Activated CD4-positive, alpha-beta memory T cell treated with anti-CD3 and anti-CD28 coated beads for 36 hours (primary cell): ENCODE measurements at regions of chr10 and their contacts with region 1.

Region 1: DNA sequence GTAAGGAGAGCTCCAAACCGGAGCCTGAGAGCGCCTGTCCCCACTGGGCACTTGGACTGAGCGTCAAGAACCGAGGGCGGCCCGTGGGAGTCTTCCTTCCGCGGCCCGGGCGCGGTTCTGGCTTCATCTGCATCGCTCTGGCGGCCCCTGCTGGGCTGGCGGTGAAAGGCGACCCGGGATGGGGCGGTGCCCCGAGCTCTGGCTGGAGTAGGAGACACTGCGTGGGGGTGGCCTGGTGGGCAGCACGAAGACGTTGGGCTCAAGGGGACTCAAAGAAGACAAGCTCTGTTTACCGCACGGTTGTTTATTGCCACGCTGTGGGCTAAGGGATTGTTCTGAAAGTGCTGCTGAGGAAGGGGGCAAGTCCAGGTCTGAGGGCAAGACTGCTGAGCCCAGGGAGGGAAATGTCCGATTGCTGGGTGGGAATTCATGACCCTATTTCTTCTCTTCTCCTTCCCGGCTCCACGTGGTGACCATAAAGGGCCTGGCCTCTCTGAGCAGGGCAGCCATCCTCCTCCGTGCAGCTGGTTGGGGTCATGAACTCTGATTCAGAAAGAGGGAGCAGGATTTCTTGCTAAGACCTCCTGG is 29.8 kb downstream of the PLAU start:
- DNase-seq: peak; percentile 89
- H3K4me3 Mint-ChIP-seq: peak overlapping the region; percentile 40
- H3K27ac Mint-ChIP-seq: no peak overlapping the region
- H3K4me1 Mint-ChIP-seq: peaks cover 8% of the 10 kb centered on the region
- H3K27me3 Mint-ChIP-seq: no peaks in the 10 kb centered on the region

Region 2: DNA sequence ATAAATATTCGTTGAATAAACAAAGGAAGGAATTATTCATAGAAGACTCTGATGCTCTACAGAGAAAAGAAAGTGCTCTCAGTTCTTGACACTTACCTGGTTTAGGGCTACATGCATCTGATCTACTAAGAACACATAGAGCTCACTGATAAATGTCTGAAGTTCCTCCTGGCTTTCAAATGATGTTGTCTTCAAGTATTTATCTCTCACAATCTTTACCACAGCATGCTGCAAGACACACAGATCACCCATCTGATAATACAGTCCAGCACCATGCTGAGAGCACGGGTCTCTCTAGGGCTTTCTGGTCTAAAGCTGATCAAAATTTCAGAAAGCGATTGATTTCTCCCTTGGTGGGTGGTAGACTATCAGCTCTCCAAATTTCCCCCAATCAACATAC is 643.8 kb before region 1 on chr10:
- CTCF ChIA-PET with region 1: no interaction called
- POLR2A ChIA-PET with region 1: no interaction called
- intact Hi-C with region 1: no loop called
- DNase-seq: no peak
- H3K4me3 Mint-ChIP-seq: no peak overlapping the region
- H3K27ac Mint-ChIP-seq: no peak overlapping the region
- H3K4me1 Mint-ChIP-seq: peaks cover 7% of the 10 kb centered on the region
- H3K27me3 Mint-ChIP-seq: peaks cover 1% of the 10 kb centered on the region

Region 3: GRCh38 chr10:73848821-73849489 is 91.8 kb before region 1 on chr10:
- CTCF ChIA-PET with region 1: interaction called, 51 read pairs
- POLR2A ChIA-PET with region 1: no interaction called
- intact Hi-C with region 1: loop called (anchors 1 kb)
- DNase-seq: peak; percentile 94
- H3K4me3 Mint-ChIP-seq: peak overlapping the region; percentile 23
- H3K27ac Mint-ChIP-seq: peak overlapping the region; percentile 74
- H3K4me1 Mint-ChIP-seq: peaks cover 11% of the 10 kb centered on the region
- H3K27me3 Mint-ChIP-seq: no peaks in the 10 kb centered on the region

Region 4: DNA sequence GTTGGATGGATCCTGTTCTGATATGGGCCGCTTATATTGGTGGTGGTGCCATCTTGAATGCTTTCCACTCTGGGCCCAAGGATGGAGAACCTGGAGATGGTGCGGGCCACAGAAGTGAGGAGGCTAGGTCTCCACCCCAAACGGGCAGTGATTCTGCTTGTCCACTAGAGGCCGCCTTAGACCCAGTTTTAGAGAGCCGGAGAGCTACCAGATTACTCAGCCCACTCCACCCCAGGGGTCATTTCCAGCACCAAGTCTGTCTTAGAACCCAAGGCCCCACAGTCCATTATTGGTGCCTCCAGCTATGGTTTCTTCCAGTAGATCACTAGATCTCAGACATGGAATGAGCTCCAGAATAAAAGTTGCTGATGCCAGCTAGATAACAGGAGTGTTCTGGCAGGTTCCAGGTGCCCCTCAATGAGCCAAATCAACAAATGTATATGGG is 54.6 kb before region 1 on chr10:
- CTCF ChIA-PET with region 1: interaction called, 383 read pairs
- POLR2A ChIA-PET with region 1: interaction called, 5 read pairs
- intact Hi-C with region 1: loop called (anchors 1 kb)
- DNase-seq: peak; percentile 78
- H3K4me3 Mint-ChIP-seq: no peak overlapping the region
- H3K27ac Mint-ChIP-seq: no peak overlapping the region
- H3K4me1 Mint-ChIP-seq: peaks cover 2% of the 10 kb centered on the region
- H3K27me3 Mint-ChIP-seq: no peaks in the 10 kb centered on the region

Region 5: GRCh38 chr10:73908853-73909538 is 31.7 kb before region 1 on chr10:
- CTCF ChIA-PET with region 1: interaction called, 13 read pairs
- POLR2A ChIA-PET with region 1: no interaction called
- intact Hi-C with region 1: no loop called
- DNase-seq: peak; percentile 87
- H3K4me3 Mint-ChIP-seq: peak overlapping the region; percentile 40
- H3K27ac Mint-ChIP-seq: peak overlapping the region; percentile 52
- H3K4me1 Mint-ChIP-seq: peaks cover 36% of the 10 kb centered on the region
- H3K27me3 Mint-ChIP-seq: peaks cover 38% of the 10 kb centered on the region

Region 6: GRCh38 chr10:73926152-73926764 is 14.5 kb before region 1 on chr10:
- CTCF ChIA-PET with region 1: interaction called, 25 read pairs
- POLR2A ChIA-PET with region 1: no interaction called
- intact Hi-C with region 1: no loop called
- DNase-seq: no peak
- H3K4me3 Mint-ChIP-seq: no peak overlapping the region
- H3K27ac Mint-ChIP-seq: no peak overlapping the region
- H3K4me1 Mint-ChIP-seq: peaks cover 16% of the 10 kb centered on the region
- H3K27me3 Mint-ChIP-seq: peaks cover 19% of the 10 kb centered on the region

Region 7: GRCh38 chr10:74072503-74072902 is 131.8 kb after region 1 on chr10:
- CTCF ChIA-PET with region 1: interaction called, 11 read pairs
- POLR2A ChIA-PET with region 1: no interaction called
- intact Hi-C with region 1: no loop called
- DNase-seq: no peak
- H3K4me3 Mint-ChIP-seq: no peak overlapping the region
- H3K27ac Mint-ChIP-seq: no peak overlapping the region
- H3K4me1 Mint-ChIP-seq: peaks cover 12% of the 10 kb centered on the region
- H3K27me3 Mint-ChIP-seq: no peaks in the 10 kb centered on the region

Region 8: DNA sequence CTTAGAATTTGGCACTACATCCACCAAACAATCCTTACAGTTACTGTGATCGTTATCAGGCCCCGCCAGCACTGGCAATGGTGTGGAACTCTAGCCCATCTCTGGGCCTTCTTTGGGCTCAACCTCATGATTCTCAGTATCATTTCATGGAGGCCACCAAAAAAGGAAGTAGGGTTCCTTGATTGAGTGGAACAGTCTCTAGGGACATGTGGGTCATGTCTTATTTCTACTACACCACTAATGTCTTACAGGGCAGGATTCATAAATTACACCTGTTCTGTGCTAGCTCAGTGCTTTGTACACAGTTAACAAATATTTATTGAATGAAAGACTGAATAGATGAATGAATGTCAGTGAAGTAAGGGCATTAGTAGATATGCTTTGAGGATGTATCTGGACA is 156.0 kb after region 1 on chr10:
- CTCF ChIA-PET with region 1: interaction called, 12 read pairs
- POLR2A ChIA-PET with region 1: no interaction called
- intact Hi-C with region 1: no loop called
- DNase-seq: no peak
- H3K4me3 Mint-ChIP-seq: no peak overlapping the region
- H3K27ac Mint-ChIP-seq: no peak overlapping the region
- H3K4me1 Mint-ChIP-seq: no peaks in the 10 kb centered on the region
- H3K27me3 Mint-ChIP-seq: no peaks in the 10 kb centered on the region

Region 9: DNA sequence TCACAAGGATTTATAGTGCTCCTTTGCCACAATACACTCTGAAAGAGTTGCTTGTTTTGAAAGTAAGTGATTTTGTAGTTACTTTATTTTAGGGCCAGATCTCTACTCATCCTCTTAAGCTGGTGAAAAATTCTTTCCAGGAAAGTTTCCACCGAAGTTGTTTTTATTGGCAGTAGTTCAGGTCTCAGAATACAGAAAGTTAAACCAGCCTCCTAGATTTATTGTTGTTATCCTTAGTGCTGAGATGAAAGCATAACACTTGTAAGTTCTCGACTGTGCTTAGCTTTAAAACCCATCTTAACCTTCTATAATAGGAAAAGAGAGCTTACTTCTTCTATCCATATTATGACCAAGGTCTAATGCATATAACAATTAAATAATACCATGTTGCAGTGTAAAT is 204.4 kb after region 1 on chr10:
- CTCF ChIA-PET with region 1: no interaction called
- POLR2A ChIA-PET with region 1: no interaction called
- intact Hi-C with region 1: no loop called
- DNase-seq: no peak
- H3K4me3 Mint-ChIP-seq: no peak overlapping the region
- H3K27ac Mint-ChIP-seq: no peak overlapping the region
- H3K4me1 Mint-ChIP-seq: peaks cover 36% of the 10 kb centered on the region
- H3K27me3 Mint-ChIP-seq: no peaks in the 10 kb centered on the region